Gastrocnemius medialis (tissue), 4 donors: ENCODE measurements at regions of chr19 and their contacts with region 1.

Region 1: DNA sequence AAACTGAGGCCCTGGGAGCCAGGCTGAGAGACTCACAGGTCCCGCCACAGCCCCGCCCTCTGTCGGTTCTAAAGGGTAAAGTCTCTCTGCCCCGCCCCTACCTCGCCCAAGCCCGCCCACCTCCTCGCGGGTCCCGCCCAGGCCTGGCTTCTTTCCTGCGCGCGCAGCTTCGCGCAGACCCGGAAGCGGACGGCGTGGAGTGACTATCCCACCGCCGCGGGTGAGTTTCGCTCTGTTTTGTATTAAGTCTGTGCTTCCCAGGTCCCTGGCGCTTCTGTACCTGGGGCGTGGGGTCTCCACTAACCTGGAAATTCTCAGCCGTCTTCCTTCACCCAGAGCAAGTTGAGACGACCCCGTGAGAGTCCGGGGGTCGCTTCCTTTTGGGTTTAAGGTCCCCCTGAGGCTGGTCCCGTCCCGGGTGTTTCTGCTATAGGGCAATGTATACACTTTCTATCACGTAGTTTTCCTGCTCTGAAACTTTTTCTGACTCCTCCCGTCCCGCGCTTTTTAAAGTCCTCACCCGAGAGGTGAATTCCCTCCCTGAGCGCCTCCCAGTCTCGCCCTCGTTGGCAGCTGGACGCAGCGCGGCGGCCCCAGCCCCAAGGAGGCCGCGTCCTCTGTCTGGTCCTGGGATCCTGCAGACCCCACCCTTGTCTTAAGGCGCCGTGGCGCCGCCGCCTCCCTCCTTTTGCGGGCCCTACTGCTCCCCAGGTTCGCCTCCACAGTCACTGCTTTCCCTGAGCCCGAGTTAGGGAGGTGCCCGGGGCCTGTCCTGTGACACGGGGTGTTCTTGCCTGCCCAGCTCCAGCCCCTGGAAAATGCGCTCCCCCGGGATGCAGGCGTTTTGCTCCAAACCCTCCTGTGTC is at the start of gene ZNF765:
- DNase-seq: peak; percentile 85 to 86
- ATAC-seq: peak; percentile 94 to 98
- H3K4me3 ChIP-seq: peak within 1 kb of the TSS; percentile 59 to 99 (median 89)
- H3K27ac ChIP-seq: peak within 1 kb of the TSS; percentile 56 to 91 (median 76)
- H3K4me1 ChIP-seq: peaks cover 17 to 22% of the 10 kb centered on the region in 2 donors
- H3K27me3 ChIP-seq: no peaks in the 10 kb centered on the region
- CTCF ChIP-seq: peak; percentile 11 to 66 (median 58)
- POLR2A ChIP-seq: peak; percentile 51 to 72
- total RNA-seq, gene ZNF765: 3.8 to 9.8 (median 5.3) TPM

Region 2: DNA sequence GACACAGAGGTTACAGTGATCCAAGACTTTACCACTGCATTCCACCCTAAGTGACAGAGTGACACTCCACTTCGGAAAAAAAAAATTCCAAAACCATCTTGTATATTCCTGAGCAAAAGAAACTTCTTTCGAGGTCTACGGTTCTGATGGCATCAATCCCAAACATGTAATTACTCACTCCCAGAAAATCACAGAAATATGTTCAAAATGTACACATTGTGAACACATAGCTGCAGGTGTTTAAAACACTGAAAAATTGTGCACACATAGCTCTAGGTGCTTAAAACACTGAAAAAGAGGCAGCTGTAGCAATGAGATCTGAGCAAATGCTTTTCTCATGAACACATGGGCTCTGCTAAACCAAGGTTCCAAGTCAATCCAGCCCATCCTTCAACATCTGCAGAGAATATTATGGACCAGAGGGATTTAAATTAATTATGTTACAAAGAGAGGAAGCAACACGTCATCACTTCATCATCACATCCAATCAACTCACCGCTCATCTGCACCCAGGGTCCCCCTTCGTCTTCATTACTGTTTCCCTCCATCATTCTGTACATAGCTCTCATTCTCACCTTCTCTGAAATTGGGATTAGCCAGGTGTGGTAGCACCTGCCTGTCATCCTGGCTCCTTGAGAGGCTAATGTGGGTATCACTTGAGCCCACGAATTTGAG is 523.6 kb before region 1 on chr19:
- in situ Hi-C with region 1: no loop called
- intact Hi-C with region 1: no loop called
- DNase-seq: no peak
- ATAC-seq: no peak
- H3K4me3 ChIP-seq: no peak overlapping the region
- H3K27ac ChIP-seq: no peak overlapping the region
- H3K4me1 ChIP-seq: no peaks in the 10 kb centered on the region
- H3K27me3 ChIP-seq: no peaks in the 10 kb centered on the region
- CTCF ChIP-seq: no peak
- POLR2A ChIP-seq: no peak

Region 3: GRCh38 chr19:52897144-52897935 is 497.9 kb before region 1 on chr19 and contains the start of gene ZNF320:
- in situ Hi-C with region 1: no loop called
- intact Hi-C with region 1: loop called (anchors 5 kb)
- DNase-seq: peak; percentile 85 to 93
- ATAC-seq: peak; percentile 99
- H3K4me3 ChIP-seq: peak within 1 kb of the TSS; percentile 66 to 96 (median 85)
- H3K27ac ChIP-seq: peak within 1 kb of the TSS; percentile 81 to 94 (median 88)
- H3K4me1 ChIP-seq: peaks cover 8 to 14% of the 10 kb centered on the region in 2 donors
- H3K27me3 ChIP-seq: no peaks in the 10 kb centered on the region
- CTCF ChIP-seq: no peak
- POLR2A ChIP-seq: peak; percentile 53 to 57
- total RNA-seq, gene ZNF320: 1.3 to 2.7 (median 2.5) TPM in 3 of 4 donors, not detected in the other

Region 4: GRCh38 chr19:53103198-53103944 is 291.8 kb before region 1 on chr19 and contains the start of gene ZNF160:
- in situ Hi-C with region 1: no loop called
- intact Hi-C with region 1: loop called (anchors 1 kb)
- DNase-seq: peak; percentile 97
- ATAC-seq: peak; percentile 97 to 98
- H3K4me3 ChIP-seq: peak within 1 kb of the TSS; percentile 81 to 98 (median 95)
- H3K27ac ChIP-seq: peak within 1 kb of the TSS; percentile 88 to 94 (median 91)
- H3K4me1 ChIP-seq: peaks cover 13 to 17% of the 10 kb centered on the region in 2 donors
- H3K27me3 ChIP-seq: no peaks in the 10 kb centered on the region
- CTCF ChIP-seq: no peak
- POLR2A ChIP-seq: peak; percentile 83 to 86
- total RNA-seq, gene ZNF160: 8.3 to 20.7 (median 11.9) TPM

Region 5: GRCh38 chr19:53158119-53158656 is 237.0 kb before region 1 on chr19:
- in situ Hi-C with region 1: no loop called
- intact Hi-C with region 1: loop called (anchors 1 kb)
- DNase-seq: peak in 1 of 2 donors; percentile 12
- ATAC-seq: peak; percentile 26 to 40
- H3K4me3 ChIP-seq: peak overlapping the region; percentile 61 to 82 (median 70)
- H3K27ac ChIP-seq: peak overlapping the region; percentile 60 to 79 (median 77)
- H3K4me1 ChIP-seq: peaks cover 0 to 17% of the 10 kb centered on the region in 2 donors
- H3K27me3 ChIP-seq: no peaks in the 10 kb centered on the region
- CTCF ChIP-seq: no peak
- POLR2A ChIP-seq: no peak

Region 6: GRCh38 chr19:53333463-53334449 is 61.5 kb before region 1 on chr19 and contains the start of gene ZNF845:
- in situ Hi-C with region 1: no loop called
- intact Hi-C with region 1: loop called (anchors 1 kb)
- DNase-seq: peak; percentile 73 to 74
- ATAC-seq: peak; percentile 91 to 97
- H3K4me3 ChIP-seq: peak within 1 kb of the TSS; percentile 61 to 74 (median 71)
- H3K27ac ChIP-seq: peak within 1 kb of the TSS; percentile 61 to 75 (median 69)
- H3K4me1 ChIP-seq: no peaks in the 10 kb centered on the region
- H3K27me3 ChIP-seq: no peaks in the 10 kb centered on the region
- CTCF ChIP-seq: no peak
- POLR2A ChIP-seq: peak in 1 of 2 donors; percentile 19
- total RNA-seq, gene ZNF845: 1.00 to 2.3 (median 1.4) TPM

Region 7: GRCh38 chr19:53365134-53365898 is 29.9 kb before region 1 on chr19 and contains the start of gene ZNF525:
- in situ Hi-C with region 1: no loop called
- intact Hi-C with region 1: loop called (anchors 1 kb)
- DNase-seq: peak; percentile 57 to 59
- ATAC-seq: peak; percentile 65 to 73
- H3K4me3 ChIP-seq: peak within 1 kb of the TSS; percentile 63 to 70 (median 67)
- H3K27ac ChIP-seq: peak within 1 kb of the TSS; percentile 37 to 64 (median 45)
- H3K4me1 ChIP-seq: no peaks in the 10 kb centered on the region
- H3K27me3 ChIP-seq: no peaks in the 10 kb centered on the region
- CTCF ChIP-seq: peak in 1 of 5 experiments; percentile 28
- POLR2A ChIP-seq: no peak
- total RNA-seq, gene ZNF525: 0.26 to 0.92 (median 0.30) TPM

Region 8: DNA sequence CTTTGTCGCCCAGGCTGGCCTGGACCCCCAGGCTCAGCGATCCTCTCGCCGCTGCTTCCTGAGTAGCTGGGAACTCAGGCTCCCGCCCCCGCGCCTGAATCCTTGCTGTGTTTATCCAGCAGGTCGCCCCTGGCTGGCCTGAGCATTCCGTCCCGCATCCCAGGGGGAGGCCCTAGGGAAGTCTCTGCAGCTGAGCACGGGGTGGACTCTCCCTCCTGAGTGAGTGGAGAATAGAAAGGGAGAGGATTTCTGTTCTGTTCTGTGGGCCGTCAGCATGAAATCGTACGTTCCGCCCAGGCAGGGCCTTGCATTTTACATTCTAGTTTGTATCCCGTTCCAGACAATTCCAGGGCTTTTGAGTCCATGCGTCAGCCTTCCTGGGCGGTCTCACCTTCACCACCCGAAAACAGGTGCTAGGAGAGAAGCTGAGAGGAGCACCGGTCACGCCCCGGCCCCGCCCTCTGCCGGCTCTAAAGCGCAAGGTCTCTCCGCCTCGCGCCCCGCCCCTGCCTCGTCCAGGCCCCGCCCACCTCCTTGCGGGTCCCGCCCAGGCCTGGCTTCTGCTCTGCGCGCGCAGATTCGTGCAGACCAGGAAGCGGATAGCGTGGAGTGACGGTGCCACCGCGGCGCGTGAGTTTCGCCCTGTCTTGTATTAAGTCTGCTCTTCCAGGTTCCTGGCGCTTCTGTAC is 36.3 kb after region 1 on chr19 and contains the start of gene ZNF761:
- in situ Hi-C with region 1: no loop called
- intact Hi-C with region 1: loop called (anchors 2 kb)
- DNase-seq: peak; percentile 87 to 90
- ATAC-seq: peak; percentile 98
- H3K4me3 ChIP-seq: peak within 1 kb of the TSS; percentile 74 to 91 (median 81)
- H3K27ac ChIP-seq: peak within 1 kb of the TSS; percentile 72 to 74 (median 74)
- H3K4me1 ChIP-seq: peaks cover 0 to 7% of the 10 kb centered on the region in 2 donors
- H3K27me3 ChIP-seq: no peaks in the 10 kb centered on the region
- CTCF ChIP-seq: peak in 4 of 5 experiments; percentile 35 to 45 (median 40)
- POLR2A ChIP-seq: peak; percentile 67 to 84
- total RNA-seq, gene ZNF761: 3.7 to 7.0 (median 4.1) TPM

Region 9: GRCh38 chr19:54137086-54137921 is 742.1 kb after region 1 on chr19 and contains the start of gene CNOT3:
- in situ Hi-C with region 1: no loop called
- intact Hi-C with region 1: no loop called
- DNase-seq: peak; percentile 100
- ATAC-seq: peak; percentile 90 to 94
- H3K4me3 ChIP-seq: peak within 1 kb of the TSS; percentile 86 to 99 (median 92)
- H3K27ac ChIP-seq: peak within 1 kb of the TSS; percentile 97 to 100 (median 98)
- H3K4me1 ChIP-seq: peaks cover 29 to 44% of the 10 kb centered on the region in 2 donors
- H3K27me3 ChIP-seq: no peaks in the 10 kb centered on the region
- CTCF ChIP-seq: no peak
- POLR2A ChIP-seq: peak; percentile 94 to 98
- total RNA-seq, gene CNOT3: 5.1 to 14.0 (median 10.2) TPM